Calu3 (cell line): ENCODE measurements at regions of chr3 and their contacts with region 1.

Region 1: DNA sequence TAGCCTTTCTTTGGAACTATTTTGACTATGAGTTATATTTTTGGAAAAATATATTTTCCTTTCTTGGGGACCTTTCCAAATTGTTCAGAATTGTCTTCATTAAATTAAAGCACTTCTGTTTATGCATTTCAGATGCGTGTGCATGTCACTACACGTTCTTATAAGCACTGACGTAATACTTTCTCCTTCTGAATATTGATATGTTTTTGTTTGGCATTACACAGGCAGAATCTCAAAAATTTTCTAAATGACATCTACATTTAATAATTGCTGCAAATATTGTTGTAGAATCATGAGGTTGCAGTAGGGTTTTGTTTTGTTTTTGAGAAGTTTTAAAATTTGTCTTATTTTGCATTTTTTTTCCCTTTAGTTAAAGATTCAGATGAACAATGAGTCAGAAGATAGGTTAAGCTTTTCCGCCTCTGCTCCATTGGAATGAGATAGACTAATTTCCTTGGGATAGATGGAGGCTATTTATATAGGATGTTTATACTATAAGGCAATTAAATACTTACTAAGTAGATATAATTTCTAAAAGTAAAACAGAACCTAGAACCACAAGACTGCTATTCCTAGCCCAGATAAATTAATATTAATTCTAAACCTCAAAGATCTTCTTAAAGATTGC is 110.8 kb downstream of the MBNL1 start:
- DNase-seq: no peak
- H3K4me3 Mint-ChIP-seq: no peak overlapping the region
- H3K27ac Mint-ChIP-seq: no peak overlapping the region
- H3K4me1 Mint-ChIP-seq: peaks cover 44% of the 10 kb centered on the region
- H3K27me3 Mint-ChIP-seq: no peaks in the 10 kb centered on the region
- CTCF ChIP-seq: no peak

Region 2: GRCh38 chr3:152365766-152366593 is 13.5 kb before region 1 on chr3:
- CTCF ChIA-PET with region 1: interaction called, 6 read pairs
- intact Hi-C with region 1: loop called (anchors 2 kb)
- DNase-seq: no peak
- H3K4me3 Mint-ChIP-seq: no peak overlapping the region
- H3K27ac Mint-ChIP-seq: peak overlapping the region; percentile 38
- H3K4me1 Mint-ChIP-seq: peaks cover 51% of the 10 kb centered on the region
- H3K27me3 Mint-ChIP-seq: no peaks in the 10 kb centered on the region
- CTCF ChIP-seq: no peak

Region 3: GRCh38 chr3:152574461-152575079 is 195.0 kb after region 1 on chr3:
- CTCF ChIA-PET with region 1: no interaction called
- intact Hi-C with region 1: no loop called
- DNase-seq: peak; percentile 60
- H3K4me3 Mint-ChIP-seq: no peak overlapping the region
- H3K27ac Mint-ChIP-seq: no peak overlapping the region
- H3K4me1 Mint-ChIP-seq: no peaks in the 10 kb centered on the region
- H3K27me3 Mint-ChIP-seq: no peaks in the 10 kb centered on the region
- CTCF ChIP-seq: peak; percentile 47